Heart left ventricle (tissue), 16 donors: ENCODE measurements at regions of chr17 and their contacts with region 1.

Region 1: GRCh38 chr17:29148790-29149430 is 31.3 kb downstream of the MYO18A start:
- DNase-seq: peak; percentile 92 to 98 (median 96)
- ATAC-seq: peak; percentile 94 to 96 (median 94)
- H3K4me3 ChIP-seq: peak overlapping the region; percentile 21 to 68 (median 56)
- H3K27ac ChIP-seq: peak overlapping the region; percentile 7 to 87 (median 78)
- H3K4me1 ChIP-seq: peaks cover 9 to 71% (median 34%) of the 10 kb centered on the region in 12 donors
- H3K27me3 ChIP-seq: no peaks in the 10 kb centered on the region
- CTCF ChIP-seq: peak; percentile 92 to 100 (median 98)
- POLR2A ChIP-seq: peak in 1 of 2 donors; percentile 69

Region 2: DNA sequence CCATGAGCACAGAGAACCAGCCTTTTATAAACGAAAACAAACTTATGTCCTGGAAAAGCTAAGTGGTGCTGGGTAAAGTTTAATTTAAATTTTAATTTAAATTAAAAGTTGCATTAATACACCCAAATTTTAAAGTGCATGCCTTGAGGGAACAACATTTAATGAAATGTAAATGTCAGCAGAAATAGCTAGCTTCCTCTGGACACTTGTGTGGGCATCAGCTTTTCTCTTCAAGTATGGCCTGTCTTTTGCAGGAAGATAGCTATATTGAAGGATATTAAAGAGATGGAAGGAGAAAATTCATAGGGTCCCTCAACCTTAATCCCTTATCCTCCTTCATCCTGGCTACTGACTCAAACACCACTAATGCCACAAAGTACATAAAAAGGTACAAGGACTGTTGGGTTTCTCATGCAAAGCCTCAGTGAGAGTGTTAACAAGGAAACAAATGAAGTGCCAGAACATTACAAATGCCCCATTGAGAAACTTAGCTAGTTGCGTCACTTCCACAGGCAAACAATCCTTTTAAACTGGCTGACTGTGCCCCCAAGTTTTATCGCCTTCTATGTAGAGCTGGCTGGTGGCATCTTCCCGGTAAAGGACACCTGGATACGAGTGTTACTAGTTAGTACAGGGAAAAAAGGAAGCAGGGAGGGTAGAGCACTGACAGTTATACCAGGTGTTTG is 211.7 kb before region 1 on chr17:
- intact Hi-C with region 1: no loop called
- DNase-seq: no peak
- ATAC-seq: peak in 2 of 4 donors; percentile 18 to 38
- H3K4me3 ChIP-seq: no peak overlapping the region
- H3K27ac ChIP-seq: peak overlapping the region in 6 of 12 donors; percentile 0 to 69 (median 8)
- H3K4me1 ChIP-seq: peaks cover 8 to 83% (median 65%) of the 10 kb centered on the region in 12 donors
- H3K27me3 ChIP-seq: no peaks in the 10 kb centered on the region
- CTCF ChIP-seq: no peak
- POLR2A ChIP-seq: no peak

Region 3: GRCh38 chr17:29102741-29103181 is 46.1 kb before region 1 on chr17:
- intact Hi-C with region 1: no loop called
- DNase-seq: peak in 1 of 5 donors; percentile 57
- ATAC-seq: peak; percentile 23 to 80 (median 35)
- H3K4me3 ChIP-seq: no peak overlapping the region
- H3K27ac ChIP-seq: peak overlapping the region in 6 of 12 donors; percentile 29 to 71 (median 41)
- H3K4me1 ChIP-seq: peaks cover 0 to 24% (median 3%) of the 10 kb centered on the region in 12 donors
- H3K27me3 ChIP-seq: no peaks in the 10 kb centered on the region
- CTCF ChIP-seq: no peak
- POLR2A ChIP-seq: no peak

Region 4: GRCh38 chr17:29124117-29124924 is 24.6 kb before region 1 on chr17:
- intact Hi-C with region 1: loop called in 2 of 10 experiments (anchors 2 kb)
- DNase-seq: peak in 1 of 5 donors; percentile 54
- ATAC-seq: peak; percentile 60 to 80 (median 74)
- H3K4me3 ChIP-seq: no peak overlapping the region
- H3K27ac ChIP-seq: peak overlapping the region in 7 of 12 donors; percentile 7 to 63 (median 38)
- H3K4me1 ChIP-seq: peaks cover 5 to 51% (median 36%) of the 10 kb centered on the region in 12 donors
- H3K27me3 ChIP-seq: no peaks in the 10 kb centered on the region
- CTCF ChIP-seq: peak; percentile 48 to 79 (median 68)
- POLR2A ChIP-seq: no peak

Region 5: GRCh38 chr17:29180034-29180787 is 31.3 kb after region 1 on chr17 and contains the start of gene MYO18A:
- intact Hi-C with region 1: loop called (anchors 1 to 5 kb)
- DNase-seq: peak; percentile 81 to 92 (median 84)
- ATAC-seq: peak; percentile 59 to 89 (median 82)
- H3K4me3 ChIP-seq: peak within 1 kb of the TSS; percentile 39 to 87 (median 67)
- H3K27ac ChIP-seq: peak within 1 kb of the TSS; percentile 68 to 95 (median 88)
- H3K4me1 ChIP-seq: peaks cover 6 to 56% (median 47%) of the 10 kb centered on the region in 12 donors
- H3K27me3 ChIP-seq: no peaks in the 10 kb centered on the region
- CTCF ChIP-seq: peak; percentile 61 to 93 (median 85)
- POLR2A ChIP-seq: peak in 1 of 2 donors; percentile 23
- total RNA-seq, gene MYO18A: 241 to 340 (median 300) TPM

Region 6: DNA sequence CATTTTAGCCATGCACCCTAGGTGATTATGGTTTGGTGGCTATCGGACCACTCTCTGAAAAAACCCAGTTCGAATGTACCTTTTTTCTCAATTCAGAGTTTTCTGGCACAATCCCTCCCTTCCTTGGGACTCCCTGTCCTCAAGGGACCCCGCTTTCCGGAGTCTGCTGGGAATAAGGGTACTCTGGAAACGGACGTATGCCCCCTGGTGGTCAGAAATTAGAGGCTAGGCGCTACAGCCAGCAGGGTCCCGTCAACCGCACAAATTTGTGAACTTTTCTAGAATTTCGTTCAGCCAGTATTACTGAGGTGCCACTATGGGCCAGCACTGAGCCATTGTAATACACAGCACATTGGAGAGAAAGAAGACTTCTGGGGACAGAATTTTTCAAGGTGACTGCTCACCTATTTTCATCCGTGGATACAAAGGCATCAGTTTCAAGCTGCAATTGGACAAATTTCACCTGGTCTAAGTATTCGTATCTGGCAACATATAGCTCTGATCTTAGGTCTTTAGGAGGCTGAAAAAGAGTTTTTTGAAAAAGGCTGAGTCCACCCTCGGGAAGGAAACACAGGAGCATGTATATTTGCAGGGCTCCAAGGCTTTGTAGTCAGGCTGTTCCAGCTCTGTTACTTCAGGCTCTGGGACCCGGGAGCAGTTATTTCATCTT is 70.6 kb after region 1 on chr17:
- intact Hi-C with region 1: loop called (anchors 1 to 5 kb)
- DNase-seq: peak; percentile 69 to 79 (median 75)
- ATAC-seq: peak; percentile 67 to 90 (median 88)
- H3K4me3 ChIP-seq: no peak overlapping the region
- H3K27ac ChIP-seq: no peak overlapping the region
- H3K4me1 ChIP-seq: peaks cover 0 to 10% (median 5%) of the 10 kb centered on the region in 12 donors
- H3K27me3 ChIP-seq: no peaks in the 10 kb centered on the region
- CTCF ChIP-seq: peak; percentile 88 to 97 (median 94)
- POLR2A ChIP-seq: no peak

Region 7: DNA sequence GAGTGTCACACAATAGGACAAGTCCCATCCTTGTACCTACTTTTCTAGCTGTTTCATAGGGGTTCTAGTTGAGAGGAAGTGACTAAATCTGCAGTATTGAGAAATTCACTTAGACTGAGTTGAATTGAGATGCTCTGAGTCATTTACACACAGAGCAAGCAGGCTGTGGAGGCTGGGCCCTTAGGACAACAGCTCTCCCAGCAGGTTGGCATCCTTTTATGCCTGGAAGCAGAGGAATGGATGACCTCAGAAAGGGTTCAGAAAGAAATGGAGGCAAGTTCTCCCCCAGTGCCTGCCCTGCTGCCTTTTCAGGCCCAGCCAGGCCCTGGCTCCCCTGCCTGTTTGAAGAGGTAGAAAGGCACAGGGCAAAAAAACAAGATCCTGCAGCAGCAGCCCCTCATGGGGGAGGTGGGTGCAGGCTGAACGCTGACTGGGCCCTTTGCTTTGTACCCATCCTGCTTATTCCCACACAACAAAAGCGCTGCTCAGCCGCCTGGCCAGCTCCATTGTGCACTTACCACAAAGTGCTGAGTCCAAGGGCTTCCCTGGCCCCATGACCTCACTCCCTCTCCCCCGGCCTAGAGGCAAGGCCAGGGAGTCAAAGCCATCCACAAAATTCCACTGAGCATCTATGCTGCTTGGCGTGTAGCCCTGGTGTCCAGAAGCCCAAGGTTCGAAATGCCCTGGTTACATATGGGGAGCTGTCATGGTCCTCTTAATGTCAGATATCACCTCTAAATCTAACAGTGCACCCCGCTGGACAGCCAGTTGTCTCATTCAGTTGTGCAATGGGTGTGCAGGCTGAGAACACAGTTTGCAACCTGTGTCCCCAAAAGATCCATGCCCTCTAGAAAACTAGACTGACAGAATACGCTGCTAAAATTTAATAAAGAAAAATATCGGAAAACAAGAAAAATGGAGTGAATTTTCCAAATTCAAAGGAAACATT is 92.4 kb after region 1 on chr17:
- intact Hi-C with region 1: no loop called
- DNase-seq: peak in 2 of 5 donors; percentile 31 to 47
- ATAC-seq: peak in 3 of 4 donors; percentile 28 to 92 (median 88)
- H3K4me3 ChIP-seq: no peak overlapping the region
- H3K27ac ChIP-seq: peak overlapping the region in 1 of 12 donors; percentile 46
- H3K4me1 ChIP-seq: peaks cover 0 to 29% (median 0%) of the 10 kb centered on the region in 12 donors
- H3K27me3 ChIP-seq: no peaks in the 10 kb centered on the region
- CTCF ChIP-seq: no peak
- POLR2A ChIP-seq: no peak

Region 8: DNA sequence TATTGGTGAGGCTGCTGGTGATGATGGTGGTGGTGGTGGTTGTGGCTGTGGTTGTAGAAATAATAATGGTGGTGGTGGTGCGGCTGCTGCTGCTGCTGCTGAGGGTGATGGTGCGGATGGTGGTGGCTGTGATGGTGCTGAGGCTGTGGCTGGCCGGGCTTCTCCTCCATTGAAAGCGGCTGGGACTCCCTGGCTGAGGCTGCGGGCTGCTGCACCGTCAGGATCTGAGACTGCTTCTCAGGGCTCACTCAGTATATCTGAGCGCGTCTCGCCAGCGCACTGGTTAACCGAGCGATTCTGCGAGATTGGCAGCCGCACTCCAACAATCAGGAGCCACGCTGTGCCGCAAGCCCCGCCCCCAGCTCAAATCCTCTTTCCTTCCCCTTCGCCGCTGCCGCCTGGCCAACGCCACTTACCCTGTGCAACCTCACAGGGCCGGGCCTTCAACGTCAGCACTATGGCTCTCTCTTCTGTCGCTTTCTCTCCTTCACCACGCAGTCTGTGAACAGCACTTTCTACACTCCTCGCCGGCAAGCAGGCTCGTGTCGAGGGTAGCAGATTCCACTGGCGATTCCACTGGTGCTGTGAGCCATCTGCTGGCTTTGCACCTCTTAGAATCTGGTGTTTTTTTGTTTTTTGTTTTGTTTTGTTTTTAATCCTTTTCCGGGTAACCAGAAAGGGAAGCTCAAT is 145.1 kb after region 1 on chr17 and contains the start of gene NUFIP2:
- intact Hi-C with region 1: loop called (anchors 2 to 5 kb)
- DNase-seq: peak; percentile 99 to 100 (median 100)
- ATAC-seq: peak; percentile 94 to 98 (median 98)
- H3K4me3 ChIP-seq: peak within 1 kb of the TSS; percentile 61 to 99 (median 90)
- H3K27ac ChIP-seq: peak within 1 kb of the TSS; percentile 92 to 100 (median 96)
- H3K4me1 ChIP-seq: peaks cover 5 to 38% (median 29%) of the 10 kb centered on the region in 12 donors
- H3K27me3 ChIP-seq: no peaks in the 10 kb centered on the region
- CTCF ChIP-seq: peak in 2 of 12 donors; percentile 19 to 30
- POLR2A ChIP-seq: peak; percentile 100
- total RNA-seq, gene NUFIP2: 24.2 to 51.5 (median 35.7) TPM

Region 9: GRCh38 chr17:29568331-29569244 is 419.7 kb after region 1 on chr17 and contains the start of gene TP53I13:
- intact Hi-C with region 1: loop called in 1 of 10 experiments (anchors 10 kb)
- DNase-seq: peak; percentile 88 to 94 (median 92)
- ATAC-seq: peak; percentile 63 to 83 (median 72)
- H3K4me3 ChIP-seq: peak within 1 kb of the TSS; percentile 66 to 86 (median 81)
- H3K27ac ChIP-seq: peak within 1 kb of the TSS; percentile 66 to 93 (median 88)
- H3K4me1 ChIP-seq: peaks cover 5 to 71% (median 41%) of the 10 kb centered on the region in 12 donors
- H3K27me3 ChIP-seq: no peaks in the 10 kb centered on the region
- CTCF ChIP-seq: no peak
- POLR2A ChIP-seq: peak in 1 of 2 donors; percentile 83
- total RNA-seq, gene TP53I13: 23.8 to 65.5 (median 38.3) TPM